Naive thymus-derived CD4-positive, alpha-beta T cell (primary cell): ENCODE measurements at regions of chr9 and their contacts with region 1.

Region 1: DNA sequence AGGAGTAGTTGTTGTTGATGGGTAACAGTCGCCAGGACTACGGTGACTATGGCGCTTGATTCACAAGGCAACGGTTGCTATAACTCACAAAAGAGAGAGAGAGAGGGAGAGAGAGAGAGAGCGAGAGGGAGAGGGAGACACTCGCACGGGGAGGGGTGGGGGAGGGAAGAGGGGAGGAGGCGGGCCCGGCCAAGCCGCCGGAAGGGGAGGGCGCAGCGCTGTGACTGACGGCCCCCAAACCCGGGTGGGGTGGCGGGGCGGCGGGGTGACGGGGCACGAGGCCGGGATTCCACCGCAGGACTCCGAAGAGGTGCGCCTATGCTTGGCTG is at the start of gene RFX3:
- DNase-seq: peak in 8 of 9 donors; percentile 87 to 97 (median 92)
- ATAC-seq: peak; percentile 81
- H3K4me3 ChIP-seq: peak within 1 kb of the TSS; percentile 97
- H3K4me3 Mint-ChIP-seq: peak within 1 kb of the TSS; percentile 90 to 99 (median 94)
- H3K27ac ChIP-seq: peak within 1 kb of the TSS; percentile 100
- H3K27ac Mint-ChIP-seq: peak within 1 kb of the TSS; percentile 95 to 100 (median 99)
- H3K4me1 ChIP-seq: peaks cover 28 to 44% of the 10 kb centered on the region in 2 donors
- H3K4me1 Mint-ChIP-seq: peaks cover 32 to 74% (median 67%) of the 10 kb centered on the region in 7 donors
- H3K27me3 ChIP-seq: no peaks in the 10 kb centered on the region
- H3K27me3 Mint-ChIP-seq: peaks cover 0 to 5% (median 0%) of the 10 kb centered on the region in 5 donors
- total RNA-seq, gene RFX3: 12.8 to 31.7 (median 28.4) TPM

Region 2: GRCh38 chr9:2837915-2838314 is 687.9 kb before region 1 on chr9:
- CTCF ChIA-PET with region 1: interaction called, 3 read pairs
- POLR2A ChIA-PET with region 1: interaction called, 23 read pairs
- intact Hi-C with region 1: no loop called
- DNase-seq: no peak
- ATAC-seq: no peak
- H3K4me3 ChIP-seq: no peak overlapping the region
- H3K4me3 Mint-ChIP-seq: no peak overlapping the region
- H3K27ac ChIP-seq: no peak overlapping the region
- H3K27ac Mint-ChIP-seq: peak overlapping the region in 2 of 9 donors; percentile 37 to 69
- H3K4me1 ChIP-seq: peaks cover 8 to 12% of the 10 kb centered on the region in 2 donors
- H3K4me1 Mint-ChIP-seq: peaks cover 9 to 27% (median 18%) of the 10 kb centered on the region in 7 donors
- H3K27me3 ChIP-seq: no peaks in the 10 kb centered on the region
- H3K27me3 Mint-ChIP-seq: no peaks in the 10 kb centered on the region

Region 3: DNA sequence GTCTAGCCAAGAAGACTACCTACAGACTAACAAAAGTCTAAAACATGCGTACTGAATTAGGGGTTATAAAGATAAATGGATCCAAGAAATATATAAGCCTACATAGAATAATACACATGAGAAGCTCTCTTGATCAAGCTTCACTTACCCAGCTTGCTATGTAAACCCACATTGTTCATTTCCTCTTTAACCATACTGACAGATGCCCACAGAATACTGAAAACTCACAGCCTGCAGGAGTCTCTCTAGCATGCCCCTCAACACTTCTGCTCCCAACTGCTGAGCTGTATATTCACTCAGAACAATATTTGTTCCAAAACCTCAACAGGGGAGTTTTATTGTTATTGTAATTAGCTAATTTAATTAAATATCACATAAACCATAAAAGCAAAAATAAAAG is 52.4 kb before region 1 on chr9:
- CTCF ChIA-PET with region 1: interaction called, 3 read pairs
- POLR2A ChIA-PET with region 1: interaction called, 56 read pairs
- intact Hi-C with region 1: loop called (anchors 1 kb)
- DNase-seq: no peak
- ATAC-seq: peak; percentile 57
- H3K4me3 ChIP-seq: no peak overlapping the region
- H3K4me3 Mint-ChIP-seq: no peak overlapping the region
- H3K27ac ChIP-seq: no peak overlapping the region
- H3K27ac Mint-ChIP-seq: peak overlapping the region in 1 of 9 donors; percentile 0
- H3K4me1 ChIP-seq: peaks cover 6 to 15% of the 10 kb centered on the region in 2 donors
- H3K4me1 Mint-ChIP-seq: peaks cover 24 to 60% (median 43%) of the 10 kb centered on the region in 7 donors
- H3K27me3 ChIP-seq: no peaks in the 10 kb centered on the region
- H3K27me3 Mint-ChIP-seq: no peaks in the 10 kb centered on the region

Region 4: DNA sequence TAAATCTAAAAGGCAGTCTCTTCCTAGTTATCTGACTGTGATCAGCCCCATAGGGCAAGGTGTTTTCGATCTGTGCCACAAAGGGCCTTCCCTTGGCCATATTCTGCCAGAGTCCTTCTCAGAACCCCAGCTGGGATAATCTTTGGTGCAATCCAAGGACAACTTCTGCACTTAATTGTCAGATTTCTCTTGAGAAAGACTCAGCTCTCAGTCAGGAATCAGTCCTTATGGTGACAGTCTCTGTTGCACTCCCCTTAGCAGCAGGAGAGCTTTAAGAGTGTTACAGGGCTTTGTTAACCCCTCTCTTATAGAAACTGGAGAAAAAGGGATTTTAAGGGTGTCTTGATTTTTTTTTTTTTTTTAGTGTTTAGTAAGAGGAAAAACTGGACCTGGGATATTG is 15.4 kb after region 1 on chr9:
- CTCF ChIA-PET with region 1: no interaction called
- POLR2A ChIA-PET with region 1: interaction called, 8 read pairs
- intact Hi-C with region 1: loop called in 1 of 2 experiments (anchors 2 kb)
- DNase-seq: no peak
- ATAC-seq: no peak
- H3K4me3 ChIP-seq: no peak overlapping the region
- H3K4me3 Mint-ChIP-seq: no peak overlapping the region
- H3K27ac ChIP-seq: no peak overlapping the region
- H3K27ac Mint-ChIP-seq: no peak overlapping the region
- H3K4me1 ChIP-seq: no peaks in the 10 kb centered on the region
- H3K4me1 Mint-ChIP-seq: peaks cover 0 to 28% (median 5%) of the 10 kb centered on the region in 7 donors
- H3K27me3 ChIP-seq: no peaks in the 10 kb centered on the region
- H3K27me3 Mint-ChIP-seq: no peaks in the 10 kb centered on the region

Region 5: GRCh38 chr9:4339357-4339756 is 813.6 kb after region 1 on chr9:
- CTCF ChIA-PET with region 1: no interaction called
- POLR2A ChIA-PET with region 1: interaction called, 11 read pairs
- intact Hi-C with region 1: no loop called
- DNase-seq: peak; percentile 62 to 84 (median 77)
- ATAC-seq: peak; percentile 90
- H3K4me3 ChIP-seq: no peak overlapping the region
- H3K4me3 Mint-ChIP-seq: peak overlapping the region in 9 of 10 donors; percentile 10 to 70 (median 48)
- H3K27ac ChIP-seq: no peak overlapping the region
- H3K27ac Mint-ChIP-seq: peak overlapping the region; percentile 16 to 92 (median 44)
- H3K4me1 ChIP-seq: no peaks in the 10 kb centered on the region
- H3K4me1 Mint-ChIP-seq: peaks cover 3 to 8% (median 7%) of the 10 kb centered on the region in 7 donors
- H3K27me3 ChIP-seq: no peaks in the 10 kb centered on the region
- H3K27me3 Mint-ChIP-seq: peaks cover 0 to 2% (median 0%) of the 10 kb centered on the region in 5 donors

Region 6: DNA sequence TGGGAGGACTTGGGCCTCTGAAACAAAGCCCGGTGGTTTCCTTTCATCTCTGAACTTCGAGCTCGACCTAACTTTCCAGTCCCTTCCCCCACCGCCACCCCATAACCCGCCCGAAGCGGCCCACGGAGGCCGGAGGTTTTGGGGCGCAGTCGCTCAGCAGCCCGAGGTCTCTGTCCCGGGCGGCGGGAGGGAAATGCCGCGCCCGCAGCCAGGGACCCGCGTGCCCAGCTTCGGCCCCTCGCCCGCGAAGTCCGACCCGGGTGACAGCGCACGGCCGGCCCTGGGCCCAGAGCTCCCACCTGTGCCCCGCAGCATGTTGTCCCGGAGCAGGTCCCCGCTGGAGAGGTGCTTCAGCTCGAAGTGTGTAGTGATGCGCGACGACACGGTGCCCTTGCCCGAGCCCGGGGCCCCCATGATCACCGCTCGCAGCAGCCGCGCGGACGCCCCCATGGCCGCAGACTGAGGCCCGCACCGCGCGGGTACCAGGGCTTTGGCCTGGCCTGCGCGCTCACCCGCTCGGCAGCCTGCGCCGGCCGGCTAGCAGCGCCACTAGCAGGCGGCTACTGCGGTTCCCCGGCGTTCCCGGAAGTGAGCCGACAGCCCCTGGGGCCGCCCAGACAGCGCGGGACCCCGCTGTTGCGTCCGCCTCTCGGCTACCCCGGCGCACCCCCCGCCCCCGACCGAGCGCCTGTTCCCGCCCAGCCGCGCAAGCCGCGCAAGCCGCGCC is 1215.0 kb after region 1 on chr9 and contains the start of gene AK3:
- CTCF ChIA-PET with region 1: no interaction called
- POLR2A ChIA-PET with region 1: interaction called, 9 read pairs
- intact Hi-C with region 1: loop called (anchors 2 kb)
- DNase-seq: peak; percentile 72 to 85 (median 83)
- ATAC-seq: peak; percentile 95
- H3K4me3 ChIP-seq: peak within 1 kb of the TSS; percentile 73
- H3K4me3 Mint-ChIP-seq: peak within 1 kb of the TSS; percentile 88 to 99 (median 94)
- H3K27ac ChIP-seq: peak within 1 kb of the TSS; percentile 86
- H3K27ac Mint-ChIP-seq: peak within 1 kb of the TSS; percentile 86 to 98 (median 93)
- H3K4me1 ChIP-seq: peaks cover 10 to 16% of the 10 kb centered on the region in 2 donors
- H3K4me1 Mint-ChIP-seq: peaks cover 22 to 49% (median 40%) of the 10 kb centered on the region in 7 donors
- H3K27me3 ChIP-seq: no peaks in the 10 kb centered on the region
- H3K27me3 Mint-ChIP-seq: no peaks in the 10 kb centered on the region
- total RNA-seq, gene AK3: 18.0 to 34.8 (median 25.8) TPM

Region 7: GRCh38 chr9:5450359-5451091 is 1924.7 kb after region 1 on chr9 and contains the start of gene CD274:
- CTCF ChIA-PET with region 1: no interaction called
- POLR2A ChIA-PET with region 1: interaction called, 3 read pairs
- intact Hi-C with region 1: loop called in 1 of 2 experiments (anchors 5 kb)
- DNase-seq: peak; percentile 61 to 89 (median 80)
- ATAC-seq: peak; percentile 95
- H3K4me3 ChIP-seq: peak within 1 kb of the TSS; percentile 78
- H3K4me3 Mint-ChIP-seq: peak within 1 kb of the TSS; percentile 92 to 98 (median 95)
- H3K27ac ChIP-seq: peak within 1 kb of the TSS; percentile 94
- H3K27ac Mint-ChIP-seq: peak within 1 kb of the TSS; percentile 97 to 99 (median 98)
- H3K4me1 ChIP-seq: peaks cover 0 to 11% of the 10 kb centered on the region in 2 donors
- H3K4me1 Mint-ChIP-seq: peaks cover 33 to 69% (median 62%) of the 10 kb centered on the region in 7 donors
- H3K27me3 ChIP-seq: no peaks in the 10 kb centered on the region
- H3K27me3 Mint-ChIP-seq: no peaks in the 10 kb centered on the region
- total RNA-seq, gene CD274: 2.9 to 38.7 (median 7.8) TPM